ENCODE measurements at regions of chr1 and their contacts with region 1.

Region 1: GRCh38 chr1:94727846-94728715 is 92.1 kb upstream of the SLC44A3 start:
- DNase-seq: peak; percentile 79
- H3K4me3 Mint-ChIP-seq: no peak overlapping the region
- H3K27ac Mint-ChIP-seq: peak overlapping the region; percentile 85
- H3K4me1 Mint-ChIP-seq: peaks cover 65% of the 10 kb centered on the region
- H3K27me3 Mint-ChIP-seq: no peaks in the 10 kb centered on the region
- CTCF ChIP-seq: no peak

Region 2: DNA sequence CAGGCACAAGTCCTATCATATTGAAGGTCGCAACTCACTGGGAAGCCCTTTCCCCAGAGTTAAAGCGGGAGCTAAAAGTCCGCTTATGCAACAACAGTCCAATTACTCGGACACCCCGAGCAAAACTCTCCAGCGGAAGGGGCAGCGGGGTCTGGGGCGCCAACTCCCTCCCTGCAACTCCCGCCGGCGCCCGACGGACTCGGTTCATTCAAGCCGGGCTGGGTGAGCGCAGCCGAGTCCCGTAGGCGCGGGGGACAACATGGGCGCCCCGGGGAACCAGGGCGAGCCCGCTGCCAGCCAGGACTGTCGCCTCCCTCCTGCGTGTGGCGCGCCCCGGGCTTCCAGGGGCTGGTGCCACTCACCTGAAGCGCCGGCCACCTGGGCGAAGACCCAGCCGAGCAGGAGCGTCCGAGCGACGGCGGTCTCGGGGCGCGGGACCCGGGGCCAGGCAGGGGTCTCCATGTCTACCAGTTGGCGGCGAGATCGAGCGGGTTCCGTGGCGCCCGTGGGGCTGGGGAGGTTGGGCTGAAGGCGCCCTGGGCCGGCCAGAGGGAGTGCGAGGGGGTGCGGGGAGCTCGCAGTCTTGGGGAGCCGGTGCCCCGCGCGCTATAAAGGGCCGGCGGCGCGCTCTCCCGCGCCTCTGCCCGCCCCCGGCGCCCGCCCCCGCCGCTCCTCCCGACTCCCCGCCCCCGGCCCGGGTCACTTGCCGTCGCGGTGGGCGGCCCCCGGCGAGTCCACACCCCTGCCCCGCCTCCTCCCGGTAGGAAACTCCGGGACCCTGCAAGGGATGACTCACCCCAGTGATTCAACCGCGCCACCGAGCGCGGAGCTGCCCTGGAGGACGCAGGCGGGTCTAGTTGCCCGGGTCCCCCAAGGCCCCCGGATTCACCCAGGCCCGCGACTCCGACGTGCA is 186.7 kb before region 1 on chr1 and contains the start of gene F3:
- CTCF ChIA-PET with region 1: interaction called, 3 read pairs
- intact Hi-C with region 1: loop called (anchors 5 kb)
- DNase-seq: peak; percentile 98
- H3K4me3 Mint-ChIP-seq: peak within 1 kb of the TSS; percentile 75
- H3K27ac Mint-ChIP-seq: peak within 1 kb of the TSS; percentile 60
- H3K4me1 Mint-ChIP-seq: peaks cover 32% of the 10 kb centered on the region
- H3K27me3 Mint-ChIP-seq: no peaks in the 10 kb centered on the region
- CTCF ChIP-seq: no peak
- total RNA-seq, gene F3: 344 and 387 TPM in 2 replicates

Region 3: GRCh38 chr1:94608142-94608851 is 119.8 kb before region 1 on chr1:
- CTCF ChIA-PET with region 1: no interaction called
- intact Hi-C with region 1: loop called (anchors 5 kb)
- DNase-seq: peak; percentile 66
- H3K4me3 Mint-ChIP-seq: peak overlapping the region; percentile 25
- H3K27ac Mint-ChIP-seq: peak overlapping the region; percentile 87
- H3K4me1 Mint-ChIP-seq: peaks cover 71% of the 10 kb centered on the region
- H3K27me3 Mint-ChIP-seq: no peaks in the 10 kb centered on the region
- CTCF ChIP-seq: no peak

Region 4: DNA sequence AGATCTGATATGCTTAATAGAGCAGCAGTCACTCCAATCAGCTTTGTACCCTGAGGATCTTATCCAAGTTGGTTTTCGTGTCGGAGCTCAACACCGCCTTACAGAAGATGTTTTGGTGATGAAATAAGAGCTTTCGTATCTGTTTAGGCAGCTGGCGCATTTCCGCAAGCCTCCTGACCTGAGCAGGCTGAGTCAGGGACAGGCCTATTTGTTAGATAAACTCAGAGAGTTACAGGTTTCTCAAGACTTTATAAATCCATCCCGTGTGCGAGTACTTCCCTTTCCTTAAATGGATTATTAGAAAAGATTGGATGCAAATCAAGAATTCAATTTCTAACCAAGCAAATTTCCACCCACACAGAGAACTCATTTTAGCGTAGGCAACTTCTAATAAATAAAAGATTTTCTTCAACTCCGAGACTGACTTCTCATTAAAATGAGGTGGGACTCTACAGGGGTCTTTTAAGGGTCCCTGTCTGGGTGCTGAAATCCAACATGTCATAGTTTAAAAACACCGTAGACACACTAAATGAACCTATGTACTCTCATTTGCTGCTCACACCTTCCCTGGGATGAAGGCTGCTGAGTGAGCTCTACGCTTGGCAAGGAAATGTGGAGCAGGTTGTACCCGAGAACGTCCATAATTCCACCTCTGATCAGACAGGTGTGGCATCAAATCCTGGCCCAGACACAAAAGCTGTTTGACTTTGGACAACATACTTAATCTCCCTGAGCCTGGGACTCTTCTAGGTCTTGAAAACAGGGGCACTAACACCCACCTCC is 79.7 kb before region 1 on chr1:
- CTCF ChIA-PET with region 1: no interaction called
- intact Hi-C with region 1: loop called (anchors 5 kb)
- DNase-seq: peak; percentile 75
- H3K4me3 Mint-ChIP-seq: peak overlapping the region; percentile 7
- H3K27ac Mint-ChIP-seq: no peak overlapping the region
- H3K4me1 Mint-ChIP-seq: peaks cover 28% of the 10 kb centered on the region
- H3K27me3 Mint-ChIP-seq: no peaks in the 10 kb centered on the region
- CTCF ChIP-seq: no peak

Region 5: DNA sequence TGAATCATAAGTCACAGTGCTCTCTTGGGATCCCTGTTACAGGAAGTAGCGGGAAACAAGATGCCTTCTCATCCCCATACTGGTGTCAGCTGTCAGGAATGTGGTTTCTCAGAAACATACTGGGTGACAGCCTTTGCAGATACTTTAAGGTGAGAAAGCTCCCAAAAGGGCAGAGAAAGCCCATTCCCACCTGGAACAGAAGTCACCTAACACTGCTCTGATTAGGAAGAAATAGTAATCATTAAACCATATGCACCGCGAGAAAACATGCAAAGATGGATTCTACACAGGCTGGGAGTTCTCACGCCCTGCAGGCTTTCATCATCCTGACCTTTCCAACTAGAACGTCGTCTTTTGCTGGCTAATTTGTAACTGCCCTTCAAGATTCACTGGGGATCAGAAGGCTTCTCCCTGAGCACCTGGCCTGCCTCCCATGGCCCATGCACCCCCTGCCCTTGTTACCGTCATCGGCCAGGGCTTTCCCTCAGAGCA is 45.9 kb after region 1 on chr1:
- CTCF ChIA-PET with region 1: no interaction called
- intact Hi-C with region 1: loop called (anchors 2 kb)
- DNase-seq: peak; percentile 49
- H3K4me3 Mint-ChIP-seq: peak overlapping the region; percentile 33
- H3K27ac Mint-ChIP-seq: peak overlapping the region; percentile 97
- H3K4me1 Mint-ChIP-seq: peaks cover 66% of the 10 kb centered on the region
- H3K27me3 Mint-ChIP-seq: no peaks in the 10 kb centered on the region
- CTCF ChIP-seq: no peak

Region 6: DNA sequence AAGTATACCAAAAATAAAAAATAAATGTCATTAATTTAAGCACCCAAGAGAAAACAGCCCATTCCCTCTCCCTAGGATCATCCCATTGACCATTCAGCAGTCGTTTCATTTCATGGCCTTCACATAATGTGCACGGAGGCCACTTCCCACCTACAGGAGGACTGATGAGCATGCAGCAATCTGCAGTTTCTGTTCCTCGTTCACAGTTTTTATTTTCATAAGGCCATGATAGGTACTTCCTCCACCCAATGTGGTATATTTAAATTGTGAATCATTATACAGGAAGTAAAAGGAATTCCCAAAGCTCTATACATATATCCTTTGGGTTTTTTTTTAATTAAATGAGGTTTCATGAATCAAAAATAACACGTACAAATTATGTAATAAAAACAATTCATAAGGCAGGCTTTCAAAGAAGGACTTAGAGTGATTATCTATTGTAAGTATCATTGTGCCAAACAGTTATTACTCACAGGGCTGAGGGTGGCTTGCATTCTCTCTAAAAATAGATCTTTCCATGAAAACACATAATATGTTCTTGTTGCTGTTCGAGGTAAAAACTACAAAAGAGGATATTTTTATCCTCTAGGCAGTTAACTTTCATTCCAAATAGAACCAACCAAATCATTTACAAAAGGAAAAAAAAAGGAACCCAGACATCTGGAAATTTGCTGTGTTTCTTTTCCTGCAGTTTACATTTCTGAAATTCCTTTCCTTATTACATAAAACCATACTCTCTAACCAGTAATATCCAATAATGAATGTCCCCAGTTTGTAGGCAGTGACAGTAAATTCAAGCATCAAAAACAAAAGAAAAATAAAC is 64.6 kb after region 1 on chr1:
- CTCF ChIA-PET with region 1: no interaction called
- intact Hi-C with region 1: loop called (anchors 5 kb)
- DNase-seq: peak; percentile 57
- H3K4me3 Mint-ChIP-seq: peak overlapping the region; percentile 5
- H3K27ac Mint-ChIP-seq: peak overlapping the region; percentile 92
- H3K4me1 Mint-ChIP-seq: peaks cover 59% of the 10 kb centered on the region
- H3K27me3 Mint-ChIP-seq: no peaks in the 10 kb centered on the region
- CTCF ChIP-seq: peak; percentile 52